GM10248 (cell line): ENCODE measurements at regions of chr18 and their contacts with region 1.

Region 1: GRCh38 chr18:55354795-55355194 is 233.2 kb downstream of the TCF4 start:
- DNase-seq: no peak
- CTCF ChIP-seq: no peak

Region 2: GRCh38 chr18:55343396-55344073 is 11.3 kb before region 1 on chr18:
- CTCF ChIA-PET with region 1: interaction called, 15 read pairs
- POLR2A ChIA-PET with region 1: no interaction called
- DNase-seq: no peak
- CTCF ChIP-seq: peak; percentile 48

Region 3: GRCh38 chr18:55509631-55510324 is 155.0 kb after region 1 on chr18:
- CTCF ChIA-PET with region 1: no interaction called
- POLR2A ChIA-PET with region 1: no interaction called
- DNase-seq: peak; percentile 45
- CTCF ChIP-seq: no peak